GM10248 (cell line): ENCODE measurements at regions of chr1 and their contacts with region 1.

Region 1: DNA sequence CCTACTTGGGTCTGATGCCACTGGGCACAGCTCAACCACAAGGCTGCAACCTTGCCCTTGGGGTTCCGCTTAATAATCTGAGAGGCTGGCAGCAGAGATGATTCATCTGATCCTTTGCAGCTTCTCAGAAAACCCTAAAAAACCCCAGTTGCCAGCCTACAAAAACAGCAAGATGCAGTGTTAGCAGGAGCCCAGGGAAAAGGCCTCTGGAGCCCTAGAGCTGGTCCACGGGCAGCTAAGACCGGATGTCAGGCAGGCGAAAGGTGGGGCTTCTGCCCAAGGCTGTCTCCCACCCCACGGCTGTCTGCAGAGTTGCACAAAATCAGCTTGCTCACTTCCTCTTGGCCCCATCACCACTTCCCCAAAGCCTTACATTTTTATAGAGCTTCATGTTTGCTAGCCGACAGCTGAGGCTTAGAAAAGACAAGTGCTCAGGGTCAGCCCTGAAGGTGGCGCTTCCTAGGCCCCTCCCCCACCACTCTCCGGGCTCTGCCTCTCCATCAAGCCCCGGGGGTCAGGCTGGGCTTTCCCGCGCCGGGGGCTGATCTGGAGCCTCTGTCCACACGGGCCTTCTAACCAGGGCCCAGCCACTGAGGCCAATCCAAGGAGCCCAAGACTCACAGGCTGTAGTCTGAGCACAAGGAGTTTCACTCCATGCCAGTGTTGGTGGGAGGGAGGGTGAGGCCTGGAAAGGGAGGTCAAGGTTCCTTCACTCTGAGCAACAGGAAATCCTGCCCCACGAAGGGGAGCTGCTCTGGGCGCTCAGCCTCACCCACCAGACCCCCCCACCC is 4.2 kb upstream of the ADORA3 start:
- DNase-seq: peak; percentile 73
- CTCF ChIP-seq: no peak

Region 2: DNA sequence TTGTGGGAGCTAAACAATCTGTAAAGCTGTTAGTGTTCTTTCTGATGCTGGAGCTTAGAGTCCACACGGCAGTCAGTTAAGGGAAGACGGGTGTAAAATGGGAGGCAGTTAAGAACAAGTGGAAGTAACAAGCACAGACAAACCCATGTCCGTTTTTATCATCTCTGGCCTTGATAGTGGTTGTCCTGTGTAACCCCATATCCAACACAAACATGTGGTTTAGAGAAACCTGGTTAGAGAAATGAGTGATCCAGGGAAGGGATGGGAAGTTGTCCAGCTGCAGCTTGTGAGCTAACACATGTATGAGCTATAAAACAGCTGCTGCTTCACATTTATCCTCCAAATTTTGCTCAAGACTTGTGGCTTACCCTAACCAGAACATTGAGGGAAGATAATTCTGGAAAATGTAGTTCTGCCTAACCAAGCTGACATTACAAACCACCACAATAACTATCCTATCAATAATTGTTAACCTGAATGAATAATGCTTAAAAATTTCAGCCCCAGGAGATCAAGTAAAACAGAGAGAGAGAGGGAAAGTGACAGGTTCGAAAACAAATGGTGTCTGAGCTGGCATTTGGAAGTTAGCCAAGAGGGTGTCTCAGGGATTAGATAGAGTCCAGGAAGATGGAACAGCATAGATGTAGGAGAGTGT is 44.5 kb before region 1 on chr1:
- CTCF ChIA-PET with region 1: interaction called, 11 read pairs
- POLR2A ChIA-PET with region 1: no interaction called
- DNase-seq: no peak
- CTCF ChIP-seq: no peak

Region 3: GRCh38 chr1:111538343-111539025 is 30.9 kb after region 1 on chr1:
- CTCF ChIA-PET with region 1: interaction called, 13 read pairs
- POLR2A ChIA-PET with region 1: no interaction called
- DNase-seq: no peak
- CTCF ChIP-seq: no peak

Region 4: GRCh38 chr1:111603979-111604378 is 96.4 kb after region 1 on chr1:
- CTCF ChIA-PET with region 1: interaction called, 24 read pairs
- POLR2A ChIA-PET with region 1: no interaction called
- DNase-seq: peak; percentile 39
- CTCF ChIP-seq: no peak

Region 5: DNA sequence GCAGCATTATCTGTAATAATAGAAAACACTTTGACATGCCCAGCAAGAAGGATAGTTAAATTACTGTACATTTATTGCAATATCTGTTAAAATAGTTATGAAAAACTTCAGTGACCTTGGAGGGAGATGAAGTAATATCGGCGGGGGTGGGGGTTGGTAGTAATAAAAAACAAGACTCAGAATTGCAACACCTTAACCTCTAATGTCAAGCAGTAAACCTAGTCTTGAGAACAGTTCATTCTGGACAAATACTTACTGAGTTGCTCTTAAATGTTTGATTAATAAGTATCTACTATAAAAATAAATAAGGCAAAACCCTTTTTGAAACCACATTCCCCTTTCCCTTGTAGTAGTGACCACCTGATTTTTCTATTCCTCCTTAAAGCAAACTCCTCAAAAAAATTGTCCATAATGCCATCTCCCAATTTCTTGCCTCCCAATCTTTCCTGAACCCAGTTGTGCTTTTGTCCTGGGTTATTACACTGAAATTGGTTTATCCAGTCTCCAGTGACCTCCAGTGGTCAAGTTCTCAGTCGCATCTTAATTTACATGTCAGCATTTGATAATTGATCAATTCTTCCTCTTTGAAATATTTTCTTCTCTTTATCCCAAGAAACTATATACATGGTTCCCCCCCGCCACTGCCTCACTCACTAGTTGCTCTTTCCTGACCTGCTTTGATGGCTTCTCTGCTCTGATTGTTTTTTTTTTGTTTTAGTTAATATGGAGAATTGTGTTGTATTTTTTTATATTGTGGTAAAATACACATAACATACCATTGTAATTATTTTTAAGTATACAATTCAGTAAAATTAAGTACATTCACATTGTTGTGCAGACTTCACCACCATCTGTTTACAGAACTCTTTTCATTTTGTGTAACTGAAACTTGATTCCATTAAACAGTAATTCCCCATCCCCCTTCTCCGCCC is 148.7 kb after region 1 on chr1:
- CTCF ChIA-PET with region 1: interaction called, 44 read pairs
- POLR2A ChIA-PET with region 1: no interaction called
- DNase-seq: no peak
- CTCF ChIP-seq: peak; percentile 51

Region 6: GRCh38 chr1:111704776-111705175 is 197.2 kb after region 1 on chr1:
- CTCF ChIA-PET with region 1: interaction called, 56 read pairs
- POLR2A ChIA-PET with region 1: no interaction called
- DNase-seq: no peak
- CTCF ChIP-seq: no peak

Region 7: DNA sequence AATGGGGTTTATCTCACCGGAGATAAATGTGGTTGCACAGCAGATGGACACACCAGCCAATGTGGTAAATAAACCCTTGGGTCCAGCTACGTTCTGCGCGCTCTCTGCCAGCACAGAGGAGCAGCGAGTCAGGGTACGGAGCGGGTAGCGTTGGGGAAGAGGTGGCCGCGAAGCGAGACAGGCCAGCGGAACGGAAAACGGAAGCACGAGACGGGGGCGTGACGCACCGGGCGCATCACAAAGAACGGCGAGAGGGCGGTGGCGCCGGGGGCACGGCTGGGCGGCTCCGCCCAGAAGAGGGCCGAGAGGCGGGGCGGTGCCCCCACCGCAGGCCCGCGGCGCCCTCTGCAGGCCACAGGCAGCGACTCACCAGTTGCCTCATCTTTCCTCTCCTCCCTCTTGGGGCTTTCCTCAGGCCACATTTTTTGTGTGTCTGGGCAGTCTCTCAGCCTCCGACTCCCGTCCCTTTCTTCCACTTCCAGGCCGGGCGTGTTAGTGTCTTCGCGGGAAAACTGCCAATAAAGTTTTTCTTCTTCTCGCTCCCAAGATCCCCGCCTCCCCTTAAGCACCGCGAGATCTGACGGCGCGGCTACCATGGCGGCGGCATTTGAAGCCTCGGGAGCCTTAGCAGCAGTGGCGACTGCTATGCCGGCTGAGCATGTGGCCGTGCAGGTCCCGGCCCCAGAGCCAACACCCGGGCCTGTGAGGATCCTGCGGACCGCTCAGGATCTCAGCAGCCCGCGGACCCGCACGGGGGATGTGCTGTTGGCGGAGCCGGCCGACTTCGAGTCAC is 247.9 kb after region 1 on chr1 and contains the start of gene DDX20:
- CTCF ChIA-PET with region 1: interaction called, 33 read pairs
- POLR2A ChIA-PET with region 1: no interaction called
- DNase-seq: peak; percentile 98
- CTCF ChIP-seq: peak; percentile 91